ENCODE measurements at regions of chr10 and their contacts with region 1.

Region 1: GRCh38 chr10:121974535-121975294 is at the start of gene NSMCE4A:
- DNase-seq: peak; percentile 77
- H3K4me3 ChIP-seq: peak within 1 kb of the TSS; percentile 80 to 92 (median 85)
- H3K27ac ChIP-seq: peak within 1 kb of the TSS; percentile 81
- H3K4me1 ChIP-seq: peaks cover 10% of the 10 kb centered on the region
- H3K27me3 ChIP-seq: no peaks in the 10 kb centered on the region
- CTCF ChIP-seq: peak; percentile 73 to 87
- POLR2A ChIP-seq: peak; percentile 66
- total RNA-seq, gene NSMCE4A: 51.0 and 52.0 TPM in 2 replicates

Region 2: GRCh38 chr10:121813211-121813815 is 161.4 kb before region 1 on chr10:
- CTCF ChIA-PET with region 1: no interaction called
- POLR2A ChIA-PET with region 1: no interaction called
- dilution Hi-C with region 1: no loop called
- intact Hi-C with region 1: no loop called
- DNase-seq: peak; percentile 83
- H3K4me3 ChIP-seq: no peak overlapping the region
- H3K27ac ChIP-seq: peak overlapping the region; percentile 34
- H3K4me1 ChIP-seq: peaks cover 8% of the 10 kb centered on the region
- H3K27me3 ChIP-seq: no peaks in the 10 kb centered on the region
- CTCF ChIP-seq: no peak
- POLR2A ChIP-seq: no peak

Region 3: GRCh38 chr10:121823993-121824463 is 150.7 kb before region 1 on chr10:
- CTCF ChIA-PET with region 1: no interaction called
- POLR2A ChIA-PET with region 1: no interaction called
- dilution Hi-C with region 1: no loop called
- intact Hi-C with region 1: loop called (anchors 5 kb)
- DNase-seq: peak; percentile 54
- H3K4me3 ChIP-seq: no peak overlapping the region
- H3K27ac ChIP-seq: no peak overlapping the region
- H3K4me1 ChIP-seq: no peaks in the 10 kb centered on the region
- H3K27me3 ChIP-seq: no peaks in the 10 kb centered on the region
- CTCF ChIP-seq: peak; percentile 40 to 59
- POLR2A ChIP-seq: no peak

Region 4: GRCh38 chr10:121927841-121928527 is 46.7 kb before region 1 on chr10 and contains the start of gene ATE1:
- CTCF ChIA-PET with region 1: interaction called, 11 read pairs
- POLR2A ChIA-PET with region 1: no interaction called
- dilution Hi-C with region 1: no loop called
- intact Hi-C with region 1: loop called (anchors 1 kb)
- DNase-seq: peak; percentile 94
- H3K4me3 ChIP-seq: peak within 1 kb of the TSS; percentile 61 to 97 (median 93)
- H3K27ac ChIP-seq: peak within 1 kb of the TSS; percentile 91
- H3K4me1 ChIP-seq: peaks cover 11% of the 10 kb centered on the region
- H3K27me3 ChIP-seq: no peaks in the 10 kb centered on the region
- CTCF ChIP-seq: no peak
- POLR2A ChIP-seq: peak; percentile 83
- total RNA-seq, gene ATE1: 19.1 and 27.1 TPM in 2 replicates

Region 5: DNA sequence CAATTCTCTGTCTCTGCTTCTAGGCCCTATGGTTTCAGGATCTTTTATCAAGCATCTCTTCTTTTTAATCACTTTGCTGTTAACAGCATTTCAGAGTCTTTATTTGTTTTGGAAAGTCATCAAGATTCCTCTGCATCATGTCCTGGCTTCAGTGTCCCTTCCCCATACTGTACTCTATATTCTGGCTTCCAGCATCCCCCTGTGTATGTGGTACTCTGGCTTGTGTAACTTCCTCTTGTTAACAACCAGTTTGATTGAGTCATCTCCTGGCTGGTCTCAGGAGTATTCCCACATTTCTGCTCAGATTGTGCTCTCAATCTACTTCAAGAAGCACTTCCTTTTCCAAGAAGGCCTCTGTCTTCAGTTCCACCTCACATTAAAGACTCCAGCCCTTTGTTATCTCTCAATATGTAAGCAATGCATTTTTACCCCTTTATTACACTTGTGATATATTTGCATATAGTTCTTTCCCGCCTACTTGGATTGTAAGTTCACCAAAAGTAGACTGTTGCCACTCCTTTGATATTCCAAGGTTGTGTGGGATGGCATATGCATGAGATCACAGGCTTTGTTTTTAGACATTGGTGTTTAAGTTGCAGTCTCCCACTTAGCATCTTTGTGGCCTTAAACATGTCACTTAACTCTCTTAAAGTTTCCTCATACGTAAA is 31.8 kb before region 1 on chr10:
- CTCF ChIA-PET with region 1: no interaction called
- POLR2A ChIA-PET with region 1: no interaction called
- dilution Hi-C with region 1: no loop called
- intact Hi-C with region 1: loop called (anchors 1 kb)
- DNase-seq: peak; percentile 97
- H3K4me3 ChIP-seq: no peak overlapping the region
- H3K27ac ChIP-seq: peak overlapping the region; percentile 69
- H3K4me1 ChIP-seq: peaks cover 23% of the 10 kb centered on the region
- H3K27me3 ChIP-seq: no peaks in the 10 kb centered on the region
- CTCF ChIP-seq: no peak
- POLR2A ChIP-seq: no peak

Region 6: DNA sequence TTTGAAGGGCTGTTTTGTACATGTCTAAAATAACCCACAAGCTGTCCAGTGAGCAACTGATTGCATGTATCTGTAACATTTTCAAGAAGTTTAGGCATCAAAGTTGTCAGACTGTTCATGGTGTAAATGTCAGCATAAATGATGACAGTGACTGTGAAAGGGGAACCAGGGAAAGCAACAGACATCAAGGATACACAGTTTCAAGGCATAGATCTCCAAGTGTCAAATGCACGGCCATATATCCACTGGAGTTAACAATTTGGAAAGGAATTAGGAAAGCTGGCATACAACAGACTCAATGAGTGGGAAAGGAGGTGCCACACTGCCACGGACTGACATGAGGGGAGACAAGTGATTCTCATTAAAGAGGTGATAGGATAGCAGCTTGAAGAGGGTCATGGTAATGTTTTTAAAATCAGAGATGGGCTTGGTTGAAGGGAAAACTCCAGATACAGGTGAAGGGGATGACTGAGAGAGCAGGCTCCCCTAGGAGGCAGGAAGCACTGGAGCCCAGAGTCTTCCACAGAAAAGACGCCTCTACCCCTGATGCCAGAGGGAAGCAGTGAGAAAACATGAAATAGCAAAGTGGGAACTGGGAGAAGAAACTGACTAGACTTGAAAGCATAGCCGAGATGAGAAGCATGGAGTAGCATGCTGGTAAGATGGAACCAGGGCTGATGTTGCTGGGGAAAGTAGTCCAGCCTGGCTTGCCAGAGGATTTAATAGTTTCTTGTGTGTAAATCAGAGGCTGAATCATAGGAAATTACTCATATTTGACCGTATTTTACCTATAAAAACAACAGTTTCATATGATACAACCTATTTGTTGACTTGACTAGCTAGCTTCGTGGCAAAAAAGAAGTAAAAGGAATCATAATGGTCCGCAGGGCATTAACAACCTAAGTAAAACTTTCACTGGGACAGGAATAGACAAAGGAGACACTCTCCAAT is 18.3 kb before region 1 on chr10:
- CTCF ChIA-PET with region 1: interaction called, 3 read pairs
- POLR2A ChIA-PET with region 1: no interaction called
- dilution Hi-C with region 1: no loop called
- intact Hi-C with region 1: loop called (anchors 1 kb)
- DNase-seq: peak; percentile 87
- H3K4me3 ChIP-seq: peak overlapping the region in 1 of 3 experiments; percentile 15
- H3K27ac ChIP-seq: peak overlapping the region; percentile 64
- H3K4me1 ChIP-seq: peaks cover 16% of the 10 kb centered on the region
- H3K27me3 ChIP-seq: no peaks in the 10 kb centered on the region
- CTCF ChIP-seq: no peak
- POLR2A ChIP-seq: no peak